ENCODE measurements at regions of chr5 and their contacts with region 1.

Region 1: DNA sequence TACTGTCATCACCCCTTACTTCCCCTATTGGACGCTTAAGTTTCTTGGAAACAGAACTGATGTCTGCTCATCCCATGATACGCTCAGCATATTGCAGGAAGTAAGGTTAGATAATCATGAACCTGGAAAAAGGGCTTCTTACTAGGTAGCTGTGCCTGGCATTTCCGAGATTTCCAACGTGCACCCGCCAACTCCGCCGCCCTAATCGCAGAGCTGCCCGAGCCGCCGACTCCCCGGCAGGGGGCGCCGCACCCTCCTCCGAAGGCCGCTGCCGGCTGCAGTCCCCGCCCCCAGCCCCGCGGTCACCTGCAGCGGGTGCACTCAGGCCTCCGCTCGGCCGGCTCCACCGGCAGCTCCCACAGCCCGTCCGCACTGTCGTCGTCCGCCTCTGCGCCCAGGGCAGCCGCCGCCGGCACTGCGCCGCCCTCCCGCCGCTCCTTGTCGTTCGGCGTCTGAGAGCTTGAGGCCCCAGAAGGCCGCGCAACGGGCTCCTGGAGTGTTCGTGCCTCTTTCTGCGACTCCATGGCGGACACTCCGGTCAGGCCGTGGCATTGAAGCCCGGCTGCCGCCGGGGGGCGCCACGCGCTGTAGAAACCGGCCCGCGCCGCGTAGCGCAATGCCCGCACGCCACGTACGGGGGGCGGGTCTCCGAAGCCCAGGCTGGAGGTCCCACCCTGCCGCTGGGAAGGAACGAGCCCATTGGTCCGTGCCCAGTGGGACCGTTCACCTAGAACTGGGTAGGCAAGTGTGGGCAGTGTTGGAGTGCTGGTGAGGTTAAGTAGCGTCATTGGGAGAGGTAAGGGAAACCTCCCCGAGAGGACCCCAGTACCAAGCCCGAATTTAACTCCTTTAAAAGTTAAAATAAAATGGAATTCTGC is at the start of gene DTWD2:
- DNase-seq: peak; percentile 54 to 96
- H3K4me3 ChIP-seq: peak within 1 kb of the TSS; percentile 76 to 99
- H3K27ac ChIP-seq: peak within 1 kb of the TSS; percentile 89 to 91
- H3K4me1 ChIP-seq: peaks cover 4 to 9% of the 10 kb centered on the region in 2 donors
- H3K27me3 ChIP-seq: no peaks in the 10 kb centered on the region
- CTCF ChIP-seq: peak; percentile 81 to 91 (median 84)
- total RNA-seq, gene DTWD2: 0.11 TPM

Region 2: DNA sequence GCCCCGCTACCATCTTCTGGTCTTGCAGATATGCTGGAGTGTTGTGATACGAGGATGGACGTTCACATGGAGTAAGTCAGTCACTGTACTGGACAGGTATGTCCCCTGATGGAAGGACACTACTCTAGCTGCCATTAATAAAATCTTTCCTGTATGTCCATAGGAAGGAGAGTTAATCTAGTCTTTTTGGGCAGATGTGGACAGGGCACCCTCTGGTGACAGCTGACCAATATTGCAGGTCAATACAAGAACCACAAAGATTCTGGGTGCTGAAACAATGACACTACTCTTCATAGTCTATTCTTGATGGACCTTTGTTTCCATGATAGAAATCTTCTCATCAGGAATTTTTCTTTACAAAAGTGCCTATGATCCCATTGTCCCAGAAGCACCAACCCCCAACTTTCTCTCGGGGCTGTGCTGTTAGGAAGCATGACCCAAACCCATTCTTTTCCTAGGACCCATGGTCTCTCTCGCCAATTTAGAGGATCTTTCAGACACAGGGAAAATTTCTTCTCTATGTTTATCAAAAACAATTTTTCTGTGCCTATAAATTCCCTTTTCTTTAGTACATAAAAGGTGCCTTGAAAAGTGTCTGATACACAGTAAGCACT is 376.8 kb before region 1 on chr5:
- intact Hi-C with region 1: no loop called
- DNase-seq: no peak
- H3K4me3 ChIP-seq: no peak overlapping the region
- H3K27ac ChIP-seq: no peak overlapping the region
- H3K4me1 ChIP-seq: no peaks in the 10 kb centered on the region
- H3K27me3 ChIP-seq: no peaks in the 10 kb centered on the region
- CTCF ChIP-seq: peak in 1 of 3 experiments; percentile 43

Region 3: DNA sequence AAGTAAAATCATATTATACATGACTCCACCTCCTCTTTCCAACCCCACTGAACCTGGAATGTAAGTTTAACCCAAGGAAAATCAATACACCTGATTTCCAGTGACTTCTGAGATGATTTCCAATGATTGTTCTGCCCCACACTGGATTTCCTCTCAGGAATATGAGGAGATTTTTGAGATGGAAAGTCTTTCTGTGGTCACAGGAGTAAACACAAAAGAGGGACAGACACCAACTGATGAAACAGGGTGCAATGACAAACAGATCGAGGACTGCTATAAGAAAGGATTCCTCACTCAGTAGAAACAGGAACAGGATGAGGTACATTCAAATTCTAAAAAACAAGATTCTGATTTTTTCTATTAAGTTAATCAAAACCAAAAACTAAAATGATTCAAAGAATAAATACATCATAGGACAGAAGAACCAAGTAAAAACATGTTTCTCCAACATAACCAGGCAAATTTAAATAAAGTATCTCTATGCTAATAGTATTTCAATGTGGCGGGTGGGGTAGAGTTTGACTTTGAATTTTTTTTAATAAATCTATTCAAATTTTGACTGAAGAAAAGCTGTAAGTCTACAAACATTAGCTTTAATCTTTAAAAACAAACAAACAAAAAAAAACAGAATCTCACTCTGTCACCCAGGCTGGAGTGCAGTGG is 42.0 kb before region 1 on chr5:
- intact Hi-C with region 1: no loop called
- DNase-seq: no peak
- H3K4me3 ChIP-seq: no peak overlapping the region
- H3K27ac ChIP-seq: no peak overlapping the region
- H3K4me1 ChIP-seq: no peaks in the 10 kb centered on the region
- H3K27me3 ChIP-seq: no peaks in the 10 kb centered on the region
- CTCF ChIP-seq: no peak

Region 4: DNA sequence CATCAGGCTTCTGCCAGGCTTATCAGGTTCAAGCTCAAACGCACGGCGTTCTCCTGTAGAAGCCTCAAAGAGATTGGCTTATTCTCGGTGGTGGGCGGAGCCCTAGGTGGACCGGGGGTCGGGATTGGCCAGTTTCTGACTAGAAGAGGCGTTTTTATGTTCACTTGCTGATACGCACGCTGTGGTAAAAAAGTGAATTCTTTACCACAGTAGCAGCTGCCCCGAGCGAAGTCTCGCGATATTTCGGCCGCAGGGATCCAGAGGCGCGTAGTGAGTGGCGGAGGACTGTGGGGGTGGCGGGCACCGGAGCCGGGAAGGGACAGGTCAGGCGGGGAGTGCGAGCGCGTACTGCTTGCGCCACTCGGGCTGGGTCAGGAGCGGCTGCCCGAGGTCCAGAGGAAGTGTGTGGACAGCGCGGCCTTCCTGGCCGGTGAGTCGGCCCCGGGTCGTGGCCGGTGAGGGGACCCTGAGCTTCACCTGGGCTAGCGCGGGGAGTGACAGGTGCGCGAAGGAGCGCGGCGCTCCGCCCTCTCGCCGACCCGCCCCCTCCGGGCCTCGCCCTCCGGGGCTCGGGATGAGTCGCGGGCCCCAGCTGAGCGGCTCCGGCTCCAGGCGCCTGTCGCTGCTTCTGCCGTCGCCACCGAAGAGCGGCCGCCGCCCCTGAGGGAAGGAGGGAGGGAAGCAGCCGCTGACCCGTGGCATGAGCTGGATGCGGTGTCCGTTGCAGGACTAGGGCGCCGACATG is 82.8 kb after region 1 on chr5 and contains the start of gene DMXL1:
- intact Hi-C with region 1: loop called (anchors 1 kb)
- DNase-seq: peak; percentile 99 to 100
- H3K4me3 ChIP-seq: peak within 1 kb of the TSS; percentile 69 to 97
- H3K27ac ChIP-seq: peak within 1 kb of the TSS; percentile 96 to 99
- H3K4me1 ChIP-seq: peaks cover 0 to 26% of the 10 kb centered on the region in 2 donors
- H3K27me3 ChIP-seq: no peaks in the 10 kb centered on the region
- CTCF ChIP-seq: no peak
- total RNA-seq, gene DMXL1: 136 TPM

Region 5: GRCh38 chr5:119238265-119239118 is 250.3 kb after region 1 on chr5:
- intact Hi-C with region 1: loop called (anchors 10 kb)
- DNase-seq: no peak
- H3K4me3 ChIP-seq: no peak overlapping the region
- H3K27ac ChIP-seq: no peak overlapping the region
- H3K4me1 ChIP-seq: no peaks in the 10 kb centered on the region
- H3K27me3 ChIP-seq: no peaks in the 10 kb centered on the region
- CTCF ChIP-seq: no peak

Region 6: GRCh38 chr5:119336845-119337580 is 348.8 kb after region 1 on chr5:
- intact Hi-C with region 1: loop called (anchors 5 kb)
- DNase-seq: no peak
- H3K4me3 ChIP-seq: no peak overlapping the region
- H3K27ac ChIP-seq: no peak overlapping the region
- H3K4me1 ChIP-seq: peaks cover 0 to 2% of the 10 kb centered on the region in 2 donors
- H3K27me3 ChIP-seq: no peaks in the 10 kb centered on the region
- CTCF ChIP-seq: no peak

Region 7: DNA sequence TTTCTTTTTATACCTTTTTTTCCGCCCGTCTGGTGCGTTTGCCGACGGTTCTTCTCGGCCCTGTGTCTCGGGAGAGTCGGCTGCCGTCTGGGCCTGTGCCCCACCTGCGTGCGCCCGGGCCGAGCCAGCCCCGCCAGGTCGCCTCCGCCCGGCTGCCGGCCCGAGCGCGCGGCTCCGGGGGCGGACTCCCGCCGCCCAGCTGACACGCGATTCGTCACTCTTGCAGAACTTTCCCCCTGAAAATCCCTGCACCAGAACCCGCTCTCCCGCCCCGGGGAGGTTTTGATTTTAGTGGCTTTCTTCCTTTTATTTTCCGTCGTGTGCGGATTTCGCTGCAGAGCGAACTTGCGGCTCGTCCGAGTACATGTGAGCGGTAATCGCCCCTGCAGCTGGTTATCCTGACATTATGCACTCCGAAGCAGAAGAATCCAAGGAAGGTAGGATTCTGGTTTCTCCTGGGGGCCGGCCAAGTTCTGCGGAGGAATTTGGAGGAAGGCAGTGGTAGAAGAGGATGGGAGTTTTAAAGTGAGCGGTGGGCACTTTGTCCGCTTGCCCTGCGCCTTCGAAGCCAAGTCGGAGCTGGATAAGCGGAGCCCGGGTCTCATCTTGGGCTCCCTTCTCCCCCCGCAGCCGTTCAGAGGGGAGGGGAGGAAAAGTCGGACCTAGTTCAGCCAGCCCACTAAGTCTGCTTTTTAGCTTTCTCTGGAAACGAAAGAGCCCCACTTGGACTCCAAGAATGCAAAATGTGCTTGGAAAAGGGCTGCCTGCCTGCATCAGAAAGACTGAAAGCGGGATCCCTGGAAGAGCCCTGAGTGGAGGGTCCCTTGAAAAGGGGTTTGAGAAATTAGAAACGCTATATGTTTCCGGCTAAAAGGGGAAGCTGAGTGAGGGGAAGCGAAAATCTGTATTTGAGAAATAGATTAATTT is 367.7 kb after region 1 on chr5 and contains the start of gene TNFAIP8:
- intact Hi-C with region 1: loop called (anchors 1 kb)
- DNase-seq: peak in 1 of 2 donors; percentile 83
- H3K4me3 ChIP-seq: peak within 1 kb of the TSS; percentile 74 to 87
- H3K27ac ChIP-seq: peak within 1 kb of the TSS; percentile 73
- H3K4me1 ChIP-seq: peaks cover 4 to 15% of the 10 kb centered on the region in 2 donors
- H3K27me3 ChIP-seq: no peaks in the 10 kb centered on the region
- CTCF ChIP-seq: no peak
- total RNA-seq, gene TNFAIP8: 3.5 TPM

Region 8: GRCh38 chr5:119411935-119412602 is 423.8 kb after region 1 on chr5:
- intact Hi-C with region 1: loop called (anchors 1 kb)
- DNase-seq: peak in 1 of 2 donors; percentile 76
- H3K4me3 ChIP-seq: peak overlapping the region; percentile 50 to 67
- H3K27ac ChIP-seq: peak overlapping the region; percentile 72 to 83
- H3K4me1 ChIP-seq: no peaks in the 10 kb centered on the region
- H3K27me3 ChIP-seq: no peaks in the 10 kb centered on the region
- CTCF ChIP-seq: peak; percentile 82 to 91 (median 86)

Region 9: DNA sequence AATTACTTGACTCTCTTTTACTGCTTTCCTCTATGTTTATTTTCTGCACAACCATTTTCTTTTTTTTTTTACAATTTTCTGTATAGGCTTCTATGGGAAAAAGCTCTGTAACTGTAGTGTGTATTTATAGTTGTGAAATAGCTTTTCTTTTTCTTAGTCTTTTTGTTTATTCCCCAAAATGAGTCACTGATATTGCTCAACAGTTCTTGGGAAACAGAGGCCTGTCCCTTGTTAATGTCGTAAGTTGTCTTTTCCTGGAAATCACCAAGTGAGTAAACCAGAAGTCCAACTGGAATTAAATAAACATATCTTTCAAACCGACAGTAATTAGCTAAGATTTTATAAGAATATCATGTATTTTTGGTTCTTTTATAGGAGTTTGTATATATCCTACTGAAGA is 1150.8 kb after region 1 on chr5:
- intact Hi-C with region 1: loop called (anchors 5 kb)
- DNase-seq: peak in 1 of 2 donors; percentile 66
- H3K4me3 ChIP-seq: no peak overlapping the region
- H3K27ac ChIP-seq: peak overlapping the region; percentile 78 to 80
- H3K4me1 ChIP-seq: peaks cover 0 to 6% of the 10 kb centered on the region in 2 donors
- H3K27me3 ChIP-seq: no peaks in the 10 kb centered on the region
- CTCF ChIP-seq: no peak

Measured in ascending aorta (tissue), 2 donors.